ENCODE measurements at regions of chr9 and their contacts with region 1.

Region 1: GRCh38 chr9:5593904-5594303 is 35.0 kb upstream of the RIC1 start:
- DNase-seq: no peak
- H3K4me3 ChIP-seq: no peak overlapping the region
- H3K27ac ChIP-seq: no peak overlapping the region
- H3K4me1 ChIP-seq: no peaks in the 10 kb centered on the region
- H3K27me3 ChIP-seq: no peaks in the 10 kb centered on the region
- CTCF ChIP-seq: no peak
- POLR2A ChIP-seq: no peak

Region 2: DNA sequence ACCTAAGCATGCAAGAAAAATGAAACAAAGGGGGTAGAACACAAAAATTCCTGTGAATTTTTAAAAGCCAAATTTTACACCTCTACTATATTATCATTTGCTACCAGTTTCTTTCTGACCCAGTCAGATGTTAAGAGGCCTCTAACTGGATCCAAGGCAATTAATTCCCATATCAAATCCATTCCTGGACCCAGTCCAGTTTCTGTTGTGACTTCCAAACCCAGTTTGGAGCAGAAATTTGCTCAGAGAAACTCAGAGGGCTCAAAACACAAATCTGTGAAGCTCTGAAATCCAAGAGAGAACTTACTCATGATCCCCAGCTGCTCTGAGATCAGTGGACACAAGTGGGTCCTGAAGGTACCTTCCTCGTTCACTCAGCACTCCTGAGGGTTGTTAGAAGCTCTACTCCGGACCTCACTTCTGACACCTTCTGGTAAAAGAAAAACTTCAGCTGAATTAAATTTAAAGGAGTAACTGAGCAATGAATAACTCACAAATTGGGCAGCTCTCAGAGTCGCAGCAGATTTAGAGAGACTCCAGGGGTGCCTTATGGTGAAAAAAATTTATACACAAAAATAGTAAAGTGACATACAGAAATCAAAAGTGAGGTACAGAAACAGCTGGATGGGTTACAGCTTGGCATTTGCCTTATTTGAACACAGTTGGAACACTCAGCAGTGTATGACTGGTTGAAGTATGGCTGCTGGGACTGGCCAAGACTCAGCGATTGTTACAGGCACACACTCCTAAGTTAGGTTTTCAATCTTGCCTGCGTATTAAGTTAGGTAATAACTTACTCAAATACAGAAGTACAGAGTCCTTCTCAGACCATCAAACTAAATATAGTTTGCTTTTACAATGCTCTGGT is 330.3 kb before region 1 on chr9:
- intact Hi-C with region 1: no loop called
- DNase-seq: no peak
- H3K4me3 ChIP-seq: no peak overlapping the region
- H3K27ac ChIP-seq: no peak overlapping the region
- H3K4me1 ChIP-seq: no peaks in the 10 kb centered on the region
- H3K27me3 ChIP-seq: no peaks in the 10 kb centered on the region
- CTCF ChIP-seq: no peak
- POLR2A ChIP-seq: no peak

Region 3: DNA sequence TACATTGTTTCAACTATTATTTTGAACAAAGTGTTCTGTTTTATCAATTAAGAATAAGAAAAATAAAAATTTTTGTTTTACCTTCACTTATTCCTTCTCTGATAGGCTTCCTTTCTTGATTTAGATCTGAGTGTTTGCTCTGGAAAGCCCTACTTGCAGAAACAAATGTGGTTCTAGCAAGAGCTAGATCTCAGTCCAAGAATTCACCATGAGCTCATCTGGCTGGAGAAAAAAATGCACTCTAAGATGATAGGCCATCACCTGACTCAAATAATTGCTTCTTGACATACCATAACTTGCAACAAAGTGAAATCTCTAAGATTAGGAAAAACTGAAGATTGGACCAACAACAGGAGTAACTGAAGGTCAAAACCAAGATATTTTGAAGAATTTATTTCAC is 283.1 kb before region 1 on chr9:
- intact Hi-C with region 1: no loop called
- DNase-seq: no peak
- H3K4me3 ChIP-seq: no peak overlapping the region
- H3K27ac ChIP-seq: no peak overlapping the region
- H3K4me1 ChIP-seq: no peaks in the 10 kb centered on the region
- H3K27me3 ChIP-seq: no peaks in the 10 kb centered on the region
- CTCF ChIP-seq: no peak
- POLR2A ChIP-seq: no peak

Region 4: DNA sequence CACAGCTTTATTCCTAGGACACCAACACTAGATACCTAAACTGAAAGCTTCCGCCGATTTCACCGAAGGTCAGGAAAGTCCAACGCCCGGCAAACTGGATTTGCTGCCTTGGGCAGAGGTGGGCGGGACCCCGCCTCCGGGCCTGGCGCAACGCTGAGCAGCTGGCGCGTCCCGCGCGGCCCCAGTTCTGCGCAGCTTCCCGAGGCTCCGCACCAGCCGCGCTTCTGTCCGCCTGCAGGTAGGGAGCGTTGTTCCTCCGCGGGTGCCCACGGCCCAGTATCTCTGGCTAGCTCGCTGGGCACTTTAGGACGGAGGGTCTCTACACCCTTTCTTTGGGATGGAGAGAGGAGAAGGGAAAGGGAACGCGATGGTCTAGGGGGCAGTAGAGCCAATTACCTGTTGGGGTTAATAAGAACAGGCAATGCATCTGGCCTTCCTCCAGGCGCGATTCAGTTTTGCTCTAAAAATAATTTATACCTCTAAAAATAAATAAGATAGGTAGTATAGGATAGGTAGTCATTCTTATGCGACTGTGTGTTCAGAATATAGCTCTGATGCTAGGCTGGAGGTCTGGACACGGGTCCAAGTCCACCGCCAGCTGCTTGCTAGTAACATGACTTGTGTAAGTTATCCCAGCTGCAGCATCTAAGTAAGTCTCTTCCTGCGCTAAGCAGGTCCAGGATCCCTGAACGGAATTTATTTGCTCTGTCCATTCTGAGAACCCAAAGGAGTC is 143.4 kb before region 1 on chr9 and contains the start of gene CD274:
- intact Hi-C with region 1: loop called (anchors 5 to 10 kb)
- DNase-seq: peak; percentile 89 to 96 (median 93)
- H3K4me3 ChIP-seq: peak within 1 kb of the TSS; percentile 7 to 61 (median 32)
- H3K27ac ChIP-seq: peak within 1 kb of the TSS; percentile 41 to 85 (median 77)
- H3K4me1 ChIP-seq: peaks cover 0 to 26% of the 10 kb centered on the region in 2 donors
- H3K27me3 ChIP-seq: no peaks in the 10 kb centered on the region
- CTCF ChIP-seq: peak; percentile 32 to 72 (median 63)
- POLR2A ChIP-seq: peak in 1 of 2 donors; percentile 61
- total RNA-seq, gene CD274: 0.66 to 5.8 (median 2.1) TPM

Measured in adrenal gland (tissue), 19 donors.